ENCODE measurements at regions of chr11 and their contacts with region 1.

Region 1: GRCh38 chr11:126607374-126607773 is 251.9 kb downstream of the ST3GAL4 start:
- DNase-seq: peak; percentile 66
- ATAC-seq: peak; percentile 98
- H3K4me3 ChIP-seq: no peak overlapping the region
- H3K27ac ChIP-seq: no peak overlapping the region
- H3K4me1 ChIP-seq: no peaks in the 10 kb centered on the region
- H3K27me3 ChIP-seq: no peaks in the 10 kb centered on the region
- CTCF ChIP-seq: peak; percentile 90
- POLR2A ChIP-seq: peak; percentile 48; the same call in 1 of the 2 replicates
- RAD21 ChIP-seq: peak; percentile 99

Region 2: DNA sequence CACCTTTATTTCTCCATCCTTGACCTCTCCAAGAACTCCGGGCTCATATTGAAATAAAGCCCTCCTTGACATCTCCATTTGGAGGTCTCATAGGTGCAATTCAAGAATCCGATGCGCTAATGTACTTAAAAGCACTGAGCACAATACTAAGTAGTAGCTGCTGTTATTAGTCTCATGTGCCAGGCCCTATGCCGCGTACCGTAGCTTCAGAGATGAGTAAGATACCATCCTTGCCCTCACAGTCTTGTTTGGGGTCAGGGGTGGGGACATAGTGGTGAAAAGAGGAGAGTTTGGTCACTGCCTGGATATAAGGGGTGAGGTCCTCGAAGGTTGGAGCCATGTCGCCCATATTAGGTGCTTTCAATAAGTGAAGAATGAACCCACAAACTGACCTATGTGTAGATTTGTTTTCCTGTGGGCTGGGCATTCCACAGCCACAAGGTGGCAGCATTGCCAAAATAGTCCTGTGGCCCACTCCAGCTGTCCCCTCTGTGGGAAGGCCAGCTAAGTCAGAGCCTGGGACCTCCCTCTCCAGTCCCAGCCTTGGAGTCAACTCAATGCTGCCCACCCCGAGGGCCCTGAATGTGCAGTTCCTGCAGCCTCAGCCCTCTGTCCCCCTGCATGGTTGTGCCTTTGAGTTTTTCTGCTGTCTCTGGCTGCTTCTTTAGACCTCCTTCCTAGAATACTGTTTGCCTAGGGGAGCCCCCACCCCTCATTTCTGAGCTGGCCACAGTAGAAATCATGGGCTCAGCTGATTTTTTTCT is 297.0 kb before region 1 on chr11:
- CTCF ChIA-PET with region 1: no interaction called
- POLR2A ChIA-PET with region 1: no interaction called
- dilution Hi-C with region 1: no loop called
- in situ Hi-C with region 1: loop called (anchors 10 kb)
- intact Hi-C with region 1: loop called (anchors 10 kb)
- DNase-seq: peak; percentile 74
- ATAC-seq: peak; percentile 98
- H3K4me3 ChIP-seq: no peak overlapping the region
- H3K27ac ChIP-seq: no peak overlapping the region
- H3K4me1 ChIP-seq: peaks cover 2% of the 10 kb centered on the region; the same call in 1 of the 2 replicates
- H3K27me3 ChIP-seq: no peaks in the 10 kb centered on the region
- CTCF ChIP-seq: peak; percentile 94
- POLR2A ChIP-seq: peak; percentile 51; the same call in 1 of the 2 replicates
- RAD21 ChIP-seq: peak; percentile 99

Region 3: DNA sequence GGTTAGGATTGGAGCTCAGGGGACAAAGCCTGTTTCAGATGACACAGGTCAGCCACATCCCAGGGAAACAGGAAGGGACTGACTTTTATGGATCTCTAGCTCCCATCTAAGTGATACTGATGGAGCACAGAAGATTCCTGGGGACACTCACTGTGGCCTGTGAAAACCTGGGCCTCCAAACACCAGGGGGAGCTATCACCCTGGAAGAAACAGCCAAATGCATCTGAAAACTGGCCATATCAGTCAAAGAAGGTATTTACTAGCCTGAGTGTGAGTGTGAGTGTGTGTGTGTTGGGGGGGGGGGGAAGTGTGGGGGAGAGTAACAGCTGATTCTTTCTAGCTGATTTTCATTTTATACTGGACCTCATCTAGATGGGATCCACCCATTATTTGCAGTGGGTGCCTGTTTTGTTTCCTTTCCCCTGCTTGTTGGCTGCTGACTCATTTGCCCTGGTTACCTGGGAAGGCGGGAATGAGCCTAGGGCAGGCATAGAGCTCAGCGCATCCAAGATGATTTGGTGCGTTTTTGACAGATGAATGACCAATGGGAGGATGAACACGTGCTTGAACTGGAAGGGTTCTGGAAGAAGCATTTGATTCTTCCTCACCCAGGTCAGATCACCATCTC is 109.2 kb after region 1 on chr11:
- CTCF ChIA-PET with region 1: interaction called, 7 read pairs
- POLR2A ChIA-PET with region 1: no interaction called
- dilution Hi-C with region 1: no loop called
- in situ Hi-C with region 1: no loop called
- intact Hi-C with region 1: loop called (anchors 1 kb)
- DNase-seq: peak; percentile 43
- ATAC-seq: peak; percentile 48
- H3K4me3 ChIP-seq: no peak overlapping the region
- H3K27ac ChIP-seq: no peak overlapping the region
- H3K4me1 ChIP-seq: peaks cover 6% of the 10 kb centered on the region
- H3K27me3 ChIP-seq: no peaks in the 10 kb centered on the region
- CTCF ChIP-seq: peak; percentile 67
- POLR2A ChIP-seq: no peak
- RAD21 ChIP-seq: peak; percentile 76

Region 4: GRCh38 chr11:126969865-126970479 is 362.6 kb after region 1 on chr11:
- CTCF ChIA-PET with region 1: no interaction called
- POLR2A ChIA-PET with region 1: no interaction called
- dilution Hi-C with region 1: no loop called
- in situ Hi-C with region 1: no loop called
- intact Hi-C with region 1: loop called (anchors 1 kb)
- DNase-seq: peak; percentile 83
- ATAC-seq: peak; percentile 99
- H3K4me3 ChIP-seq: no peak overlapping the region
- H3K27ac ChIP-seq: no peak overlapping the region
- H3K4me1 ChIP-seq: no peaks in the 10 kb centered on the region
- H3K27me3 ChIP-seq: no peaks in the 10 kb centered on the region
- CTCF ChIP-seq: peak; percentile 93
- POLR2A ChIP-seq: peak; percentile 56
- RAD21 ChIP-seq: peak; percentile 94

Region 5: DNA sequence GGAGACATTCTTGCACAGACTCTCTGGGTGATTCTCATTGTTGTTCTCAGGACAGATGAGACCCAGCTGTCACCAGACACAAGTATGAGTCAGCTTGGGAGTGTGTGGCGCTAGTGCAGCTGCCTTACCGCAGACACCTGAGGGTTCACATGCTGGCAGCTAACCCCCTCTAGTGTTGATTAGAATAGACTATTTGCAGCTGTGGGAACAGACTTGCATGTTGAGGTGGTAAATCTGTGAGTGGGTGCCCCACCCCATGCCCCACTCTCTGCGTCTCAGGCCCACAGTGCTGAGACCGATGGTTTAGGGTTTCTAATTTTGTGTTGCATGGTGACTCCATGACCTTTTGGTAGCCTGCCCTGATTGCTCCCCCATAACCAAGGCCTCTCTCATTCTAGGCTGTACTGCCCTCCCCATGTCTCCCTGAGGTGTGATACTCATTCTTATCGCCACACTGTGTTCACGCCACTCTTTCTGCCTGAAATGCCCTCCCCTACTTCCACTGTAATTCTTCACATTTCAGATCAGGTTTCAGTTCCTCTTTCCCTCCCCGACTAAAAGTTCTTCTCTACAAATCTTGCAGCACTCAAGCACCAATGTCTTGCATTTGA is 466.9 kb after region 1 on chr11:
- CTCF ChIA-PET with region 1: interaction called, 3 read pairs
- POLR2A ChIA-PET with region 1: no interaction called
- dilution Hi-C with region 1: no loop called
- in situ Hi-C with region 1: loop called (anchors 10 kb)
- intact Hi-C with region 1: loop called (anchors 5 kb)
- DNase-seq: peak; percentile 72
- ATAC-seq: peak; percentile 65
- H3K4me3 ChIP-seq: no peak overlapping the region
- H3K27ac ChIP-seq: no peak overlapping the region
- H3K4me1 ChIP-seq: 0 out of 2 replicates have a peak, but pooled peaks cover 2% of the 10 kb centered on the region
- H3K27me3 ChIP-seq: peaks cover 50% of the 10 kb centered on the region
- CTCF ChIP-seq: peak; percentile 56
- POLR2A ChIP-seq: no peak
- RAD21 ChIP-seq: peak; percentile 75

Measured in IMR-90 (cell line).